PC-9 (cell line): ENCODE measurements at regions of chr17 and their contacts with region 1.

Region 1: DNA sequence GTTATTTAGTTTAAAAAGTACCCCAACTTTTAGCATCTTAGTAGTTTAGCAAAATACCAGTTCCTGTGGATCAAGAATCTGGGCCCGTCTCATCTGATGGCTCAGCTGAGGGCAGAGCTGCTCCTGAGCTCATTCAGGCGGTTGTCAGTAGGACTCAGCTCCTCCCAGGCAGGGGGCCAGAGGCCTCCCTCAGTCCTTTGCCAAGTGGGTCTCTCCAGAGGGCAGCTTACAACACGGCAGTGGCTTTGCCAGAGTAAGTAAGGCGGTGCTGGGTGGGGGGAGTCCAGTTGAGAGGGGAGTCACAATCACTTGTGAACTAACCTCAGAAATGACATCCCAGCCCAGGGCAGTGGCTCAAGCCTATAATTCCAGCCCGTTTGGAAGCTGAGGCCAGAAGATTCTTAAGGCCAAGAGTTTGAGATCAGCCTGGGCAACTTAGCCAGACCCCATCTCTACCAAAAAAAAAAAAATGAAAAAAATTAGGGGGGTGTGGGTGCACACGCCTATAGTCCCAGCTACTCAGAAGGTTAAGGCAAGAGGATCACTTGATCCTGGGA is 81.5 kb upstream of the MED9 start:
- DNase-seq: no peak
- H3K4me3 ChIP-seq: no peak overlapping the region
- H3K27ac ChIP-seq: no peak overlapping the region
- H3K4me1 ChIP-seq: no peaks in the 10 kb centered on the region
- H3K27me3 ChIP-seq: peaks cover 35% of the 10 kb centered on the region
- CTCF ChIP-seq: no peak

Region 2: DNA sequence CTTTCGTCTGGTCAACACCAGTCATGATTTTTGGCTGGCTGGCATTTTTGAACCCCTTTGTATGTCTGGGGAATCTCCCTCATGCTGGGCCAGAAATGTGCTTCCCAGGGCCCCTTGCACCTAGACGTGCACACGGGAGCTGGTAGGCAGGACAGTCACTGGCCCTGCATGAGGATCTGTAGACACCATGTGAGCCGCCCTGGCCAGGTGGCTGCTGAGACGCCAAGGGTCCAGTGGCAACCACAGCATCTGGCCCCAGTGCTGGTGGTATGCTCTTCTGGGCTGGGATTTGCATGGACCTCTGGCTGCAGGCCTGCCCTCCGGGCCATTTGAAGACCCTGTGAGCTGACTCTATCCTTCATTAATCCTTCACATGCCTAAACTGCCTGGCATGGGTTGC is 24.6 kb before region 1 on chr17:
- CTCF ChIA-PET with region 1: no interaction called
- POLR2A ChIA-PET with region 1: interaction called, 12 read pairs
- intact Hi-C with region 1: no loop called
- DNase-seq: no peak
- H3K4me3 ChIP-seq: no peak overlapping the region
- H3K27ac ChIP-seq: no peak overlapping the region
- H3K4me1 ChIP-seq: no peaks in the 10 kb centered on the region
- H3K27me3 ChIP-seq: peaks cover 59% of the 10 kb centered on the region
- CTCF ChIP-seq: no peak